ENCODE measurements at regions of chr1 and their contacts with region 1.

Region 1: GRCh38 chr1:39102537-39103327 is 76.6 kb downstream of the NDUFS5 start:
- DNase-seq: no peak
- ATAC-seq: peak; percentile 22 to 38
- H3K4me3 ChIP-seq: no peak overlapping the region
- H3K27ac ChIP-seq: no peak overlapping the region
- H3K4me1 ChIP-seq: peaks cover 37% of the 10 kb centered on the region
- H3K27me3 ChIP-seq: no peaks in the 10 kb centered on the region
- CTCF ChIP-seq: peak; percentile 70

Region 2: GRCh38 chr1:38500352-38500751 is 602.4 kb before region 1 on chr1:
- intact Hi-C with region 1: no loop called
- DNase-seq: no peak
- ATAC-seq: no peak
- H3K4me3 ChIP-seq: no peak overlapping the region
- H3K27ac ChIP-seq: no peak overlapping the region
- H3K4me1 ChIP-seq: no peaks in the 10 kb centered on the region
- H3K27me3 ChIP-seq: no peaks in the 10 kb centered on the region
- CTCF ChIP-seq: peak; percentile 25

Region 3: DNA sequence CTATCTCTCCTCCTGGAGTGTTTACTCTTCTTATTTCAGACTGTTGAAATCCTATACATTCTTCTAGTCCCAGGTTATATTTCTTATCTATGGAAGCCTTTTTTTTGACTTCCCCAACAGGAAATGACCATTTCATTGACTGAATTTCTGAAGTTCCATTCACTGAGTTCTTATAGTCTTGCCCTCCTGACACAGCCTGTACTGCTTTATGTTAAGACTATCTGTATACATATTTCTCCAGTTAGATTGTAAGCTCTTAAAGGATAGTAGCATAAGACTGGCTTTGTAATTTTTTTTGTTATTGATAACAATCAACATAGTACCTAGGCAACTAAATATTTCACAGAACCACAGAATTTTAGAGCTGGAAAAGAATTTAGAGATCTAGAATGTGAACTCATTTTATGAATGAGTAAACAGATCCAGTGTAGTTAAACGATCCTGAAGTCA is 86.9 kb after region 1 on chr1:
- intact Hi-C with region 1: loop called (anchors 5 kb)
- DNase-seq: no peak
- ATAC-seq: no peak
- H3K4me3 ChIP-seq: no peak overlapping the region
- H3K27ac ChIP-seq: peak overlapping the region; percentile 24
- H3K4me1 ChIP-seq: peaks cover 86% of the 10 kb centered on the region
- H3K27me3 ChIP-seq: no peaks in the 10 kb centered on the region
- CTCF ChIP-seq: no peak

Region 4: GRCh38 chr1:39268112-39268581 is 165.4 kb after region 1 on chr1:
- intact Hi-C with region 1: loop called (anchors 10 kb)
- DNase-seq: no peak
- ATAC-seq: peak; percentile 81 to 92
- H3K4me3 ChIP-seq: peak overlapping the region; percentile 34
- H3K27ac ChIP-seq: peak overlapping the region; percentile 73
- H3K4me1 ChIP-seq: peaks cover 69% of the 10 kb centered on the region
- H3K27me3 ChIP-seq: no peaks in the 10 kb centered on the region
- CTCF ChIP-seq: no peak